Right ventricle myocardium inferior (tissue), 1 donor: ENCODE measurements at regions of chr10 and their contacts with region 1.

Region 1: GRCh38 chr10:104350127-104350635 is 3.5 kb upstream of the CFAP58 start:
- DNase-seq: no peak
- ATAC-seq: peak; percentile 63

Region 2: DNA sequence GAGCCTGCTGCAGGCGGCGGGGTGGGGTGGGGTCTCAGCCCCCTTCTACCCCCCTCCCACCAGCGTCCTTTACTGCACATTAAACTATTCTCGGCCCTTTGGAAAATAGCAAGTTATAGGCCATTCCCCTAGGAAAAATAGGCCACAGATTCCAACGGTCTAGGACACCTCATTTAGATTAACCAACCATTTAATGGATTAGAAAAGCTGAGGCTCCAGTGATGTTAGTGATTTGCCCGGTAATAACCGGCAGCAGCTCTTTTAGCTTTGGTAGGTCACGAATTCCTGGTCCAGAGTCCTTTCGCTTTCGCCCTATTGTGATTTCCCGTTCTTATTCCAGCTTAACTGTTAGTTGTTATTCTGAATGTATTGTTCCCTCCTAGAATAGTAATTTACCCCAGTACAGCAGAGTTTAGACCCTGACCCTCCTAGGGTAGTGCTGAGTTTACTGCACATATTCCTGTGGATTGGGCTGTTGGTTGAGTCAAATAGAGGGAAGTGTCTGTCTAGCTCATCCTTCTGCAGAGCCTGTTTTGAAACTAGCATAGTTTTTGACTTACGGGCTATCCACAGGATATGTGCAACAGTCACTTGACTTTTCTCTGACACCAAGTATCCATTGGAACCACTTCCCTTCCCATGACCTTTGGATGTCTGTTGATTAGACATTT is 94.7 kb before region 1 on chr10:
- intact Hi-C with region 1: no loop called
- DNase-seq: no peak
- ATAC-seq: peak; percentile 49

Region 3: DNA sequence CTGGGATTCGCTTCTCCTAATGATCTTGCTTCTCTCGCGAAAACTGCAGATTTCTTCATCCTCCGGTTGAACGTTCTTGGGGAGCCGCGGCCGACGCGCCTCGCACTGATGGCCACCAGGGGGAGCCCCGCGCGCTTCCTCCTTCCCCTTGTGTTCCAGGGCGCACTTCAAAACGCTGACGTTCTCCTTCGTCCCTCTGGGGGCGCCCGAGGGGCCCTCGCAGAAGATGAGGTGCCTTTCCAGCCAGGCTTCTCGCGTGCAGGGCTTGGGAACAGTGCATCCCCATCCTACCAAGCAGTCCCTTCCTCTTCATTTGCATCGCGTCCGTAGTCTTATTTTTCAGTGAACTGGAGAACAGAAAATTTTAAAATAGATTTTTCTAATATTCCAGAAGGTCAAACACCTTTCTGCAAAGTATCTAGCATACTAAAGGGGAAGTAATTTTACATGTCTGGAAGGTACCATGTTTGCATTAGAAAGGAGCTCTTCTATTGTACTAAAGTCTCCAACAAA is 58.7 kb before region 1 on chr10:
- intact Hi-C with region 1: loop called (anchors 1 kb)
- DNase-seq: peak; percentile 96
- ATAC-seq: peak; percentile 96

Region 4: DNA sequence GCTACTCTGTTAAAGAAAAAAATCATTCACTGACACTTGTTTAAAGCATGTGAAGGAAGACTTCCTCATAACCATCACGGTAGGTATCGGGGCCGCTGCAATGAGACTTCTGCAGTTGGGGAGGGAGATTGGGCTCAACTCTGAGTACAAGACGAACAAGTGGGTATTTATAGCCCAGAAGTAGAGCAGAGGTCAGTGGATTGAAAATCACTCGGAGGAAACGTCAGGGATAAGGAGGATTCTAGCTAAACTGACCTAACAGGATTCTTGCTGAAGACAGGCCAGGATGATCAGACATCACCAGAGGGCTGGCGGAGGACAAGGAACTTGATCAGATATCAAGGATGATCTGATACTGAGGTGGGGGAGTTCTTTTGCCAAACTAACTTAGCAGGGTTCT is 45.2 kb before region 1 on chr10:
- intact Hi-C with region 1: loop called (anchors 1 kb)
- DNase-seq: no peak
- ATAC-seq: peak; percentile 37